ENCODE measurements at regions of chr1 and their contacts with region 1.

Region 1: GRCh38 chr1:162141273-162142023 is 72.0 kb downstream of the NOS1AP start:
- DNase-seq: no peak
- ATAC-seq: no peak
- H3K4me3 ChIP-seq: no peak overlapping the region
- H3K4me1 ChIP-seq: no peaks in the 10 kb centered on the region
- CTCF ChIP-seq: no peak

Region 2: DNA sequence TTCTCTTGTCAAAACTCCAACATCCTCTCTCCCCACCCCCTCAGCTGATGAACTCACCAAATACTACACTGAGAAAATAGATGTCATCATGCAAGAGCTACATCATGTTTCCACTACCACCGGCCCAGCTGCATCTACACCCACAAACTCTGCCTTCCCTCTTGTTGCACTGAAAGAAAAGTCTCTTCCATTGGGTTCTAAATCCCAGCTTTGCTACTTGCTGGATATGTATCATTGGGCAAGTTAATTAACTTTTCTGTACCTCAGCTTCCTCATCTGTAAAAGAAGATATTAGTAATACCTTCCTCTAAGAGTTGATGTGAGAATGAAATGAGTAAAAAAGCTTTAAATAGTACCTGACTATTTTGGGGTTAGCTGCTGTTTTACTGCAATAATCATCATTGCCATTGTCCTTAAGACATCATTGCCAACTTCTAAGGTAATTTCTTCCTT is 226.4 kb before region 1 on chr1:
- intact Hi-C with region 1: no loop called
- DNase-seq: no peak
- ATAC-seq: no peak
- H3K4me3 ChIP-seq: no peak overlapping the region
- H3K4me1 ChIP-seq: no peaks in the 10 kb centered on the region
- CTCF ChIP-seq: no peak

Region 3: DNA sequence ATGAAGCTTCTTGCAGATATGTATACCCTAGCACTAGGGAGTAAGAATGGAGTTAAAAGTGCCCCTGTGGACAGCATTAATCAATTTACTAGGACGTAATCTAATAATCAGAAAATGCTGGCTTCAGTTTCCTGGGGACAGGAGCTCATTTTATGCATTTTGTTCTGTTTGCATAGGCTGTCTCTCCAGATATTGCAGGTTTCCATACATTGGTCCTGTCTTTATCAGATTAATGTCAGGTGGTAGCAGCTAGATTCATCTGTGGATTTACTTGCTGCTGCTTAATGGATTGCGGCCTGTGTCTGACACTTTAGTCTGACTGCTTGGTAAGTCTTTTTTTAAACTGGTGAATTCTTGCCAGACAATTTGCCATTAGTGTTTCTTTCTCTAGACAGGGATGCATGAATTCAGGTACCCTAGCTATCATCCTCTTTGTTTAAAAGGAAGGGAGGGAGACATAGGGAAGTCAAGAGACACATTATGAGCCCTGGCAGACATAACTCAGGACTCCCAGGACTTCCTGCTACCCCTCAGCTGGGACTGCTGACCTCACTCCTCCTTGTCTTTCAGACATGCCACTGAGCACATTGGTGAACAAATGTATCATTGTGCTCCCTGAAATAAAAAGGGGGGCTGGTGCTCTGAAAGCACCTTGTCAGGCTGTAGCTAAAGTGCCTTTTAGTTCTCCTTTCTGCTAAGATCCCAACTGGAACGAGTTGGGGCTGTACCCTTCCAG is 24.2 kb before region 1 on chr1:
- intact Hi-C with region 1: loop called in 1 of 2 experiments (anchors 2 kb)
- DNase-seq: no peak
- ATAC-seq: no peak
- H3K4me3 ChIP-seq: no peak overlapping the region
- H3K4me1 ChIP-seq: no peaks in the 10 kb centered on the region
- CTCF ChIP-seq: no peak